Panc1 (cell line): ENCODE measurements at regions of chr16 and their contacts with region 1.

Region 1: GRCh38 chr16:76278980-76279379 is 1.8 kb downstream of the CNTNAP4 start:
- DNase-seq: peak; percentile 7
- ATAC-seq: no peak
- H3K4me3 ChIP-seq: no peak overlapping the region
- H3K27ac ChIP-seq: no peak overlapping the region
- H3K4me1 ChIP-seq: no peaks in the 10 kb centered on the region
- H3K27me3 ChIP-seq: no peaks in the 10 kb centered on the region
- CTCF ChIP-seq: peak; percentile 19; the same call in 1 of the 2 replicates

Region 2: GRCh38 chr16:75794426-75794825 is 484.6 kb before region 1 on chr16:
- CTCF ChIA-PET with region 1: no interaction called
- POLR2A ChIA-PET with region 1: no interaction called
- in situ Hi-C with region 1: no loop called
- intact Hi-C with region 1: loop called (anchors 10 kb)
- DNase-seq: no peak
- ATAC-seq: no peak
- H3K4me3 ChIP-seq: no peak overlapping the region
- H3K27ac ChIP-seq: no peak overlapping the region
- H3K4me1 ChIP-seq: no peaks in the 10 kb centered on the region
- H3K27me3 ChIP-seq: no peaks in the 10 kb centered on the region
- CTCF ChIP-seq: no peak

Region 3: DNA sequence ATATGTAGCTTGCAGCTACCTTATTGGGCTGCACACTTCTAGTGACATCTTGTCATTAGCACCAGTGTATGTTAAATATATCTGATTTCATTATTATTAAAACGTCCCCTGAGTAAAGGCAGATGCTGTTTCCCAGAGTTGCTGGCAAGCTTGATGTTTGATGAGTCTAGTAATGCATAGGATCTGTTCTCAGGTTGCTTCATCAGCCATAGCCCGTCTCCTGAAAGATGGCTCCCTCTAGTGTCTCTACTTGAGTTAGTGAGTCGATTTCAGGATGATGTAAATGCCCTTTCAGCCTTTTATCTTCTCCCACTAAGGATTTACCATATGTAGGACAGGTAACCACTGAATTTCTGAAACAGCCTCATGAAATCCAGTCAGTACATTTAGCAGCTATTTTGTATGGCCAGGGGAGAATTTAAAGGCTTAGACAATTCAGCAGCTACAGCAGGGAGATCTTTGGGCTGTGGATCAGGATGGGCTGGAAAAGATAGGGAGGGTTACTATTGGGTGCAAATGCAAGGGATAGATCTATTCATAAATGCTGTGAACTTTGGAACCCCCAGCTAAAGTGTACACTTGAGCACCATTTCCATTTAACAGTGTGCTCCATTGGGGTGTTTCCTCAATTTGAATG is 374.5 kb after region 1 on chr16:
- CTCF ChIA-PET with region 1: no interaction called
- POLR2A ChIA-PET with region 1: no interaction called
- in situ Hi-C with region 1: no loop called
- intact Hi-C with region 1: loop called (anchors 5 kb)
- DNase-seq: peak; percentile 22
- ATAC-seq: peak; percentile 79
- H3K4me3 ChIP-seq: no peak overlapping the region
- H3K27ac ChIP-seq: no peak overlapping the region
- H3K4me1 ChIP-seq: no peaks in the 10 kb centered on the region
- H3K27me3 ChIP-seq: no peaks in the 10 kb centered on the region
- CTCF ChIP-seq: peak; percentile 71